Activated CD4-positive, alpha-beta memory T cell treated with anti-CD3 and anti-CD28 coated beads for 36 hours (primary cell): ENCODE measurements at regions of chr12 and their contacts with region 1.

Region 1: GRCh38 chr12:5988659-5989116 is 43.6 kb upstream of the ANO2 start:
- DNase-seq: peak; percentile 79
- H3K4me3 Mint-ChIP-seq: no peak overlapping the region
- H3K27ac Mint-ChIP-seq: no peak overlapping the region
- H3K4me1 Mint-ChIP-seq: no peaks in the 10 kb centered on the region
- H3K27me3 Mint-ChIP-seq: no peaks in the 10 kb centered on the region

Region 2: DNA sequence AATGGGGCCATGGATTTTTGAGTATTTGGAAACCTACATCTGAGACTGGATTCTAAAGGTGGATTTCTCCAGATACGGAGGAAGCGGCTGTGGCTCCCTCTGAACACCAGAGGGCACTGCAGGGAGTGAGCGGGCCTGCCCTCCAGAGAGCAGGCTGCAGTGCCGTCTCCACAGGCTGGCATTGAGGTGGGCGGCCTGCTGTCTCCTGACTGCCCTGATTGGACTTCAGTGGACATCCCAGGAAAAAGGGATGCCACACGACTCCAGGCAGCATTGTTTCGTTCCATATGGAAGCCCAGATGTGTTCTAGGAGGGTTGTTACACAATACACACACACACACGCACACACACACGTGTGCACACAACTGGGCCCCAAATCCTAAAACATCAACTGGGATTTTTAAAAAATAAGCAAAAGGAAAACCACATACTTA is 22.7 kb before region 1 on chr12:
- CTCF ChIA-PET with region 1: interaction called, 17 read pairs
- POLR2A ChIA-PET with region 1: no interaction called
- intact Hi-C with region 1: no loop called
- DNase-seq: peak; percentile 57
- H3K4me3 Mint-ChIP-seq: no peak overlapping the region
- H3K27ac Mint-ChIP-seq: no peak overlapping the region
- H3K4me1 Mint-ChIP-seq: no peaks in the 10 kb centered on the region
- H3K27me3 Mint-ChIP-seq: peaks cover 4% of the 10 kb centered on the region

Region 3: GRCh38 chr12:5977556-5977955 is 11.1 kb before region 1 on chr12:
- CTCF ChIA-PET with region 1: interaction called, 24 read pairs
- POLR2A ChIA-PET with region 1: no interaction called
- intact Hi-C with region 1: no loop called
- DNase-seq: no peak
- H3K4me3 Mint-ChIP-seq: no peak overlapping the region
- H3K27ac Mint-ChIP-seq: no peak overlapping the region
- H3K4me1 Mint-ChIP-seq: no peaks in the 10 kb centered on the region
- H3K27me3 Mint-ChIP-seq: peaks cover 15% of the 10 kb centered on the region

Region 4: GRCh38 chr12:6039894-6040568 is 51.3 kb after region 1 on chr12:
- CTCF ChIA-PET with region 1: interaction called, 285 read pairs
- POLR2A ChIA-PET with region 1: no interaction called
- intact Hi-C with region 1: loop called (anchors 1 kb)
- DNase-seq: peak; percentile 58
- H3K4me3 Mint-ChIP-seq: no peak overlapping the region
- H3K27ac Mint-ChIP-seq: no peak overlapping the region
- H3K4me1 Mint-ChIP-seq: no peaks in the 10 kb centered on the region
- H3K27me3 Mint-ChIP-seq: no peaks in the 10 kb centered on the region

Region 5: GRCh38 chr12:6285063-6285477 is 296.4 kb after region 1 on chr12:
- CTCF ChIA-PET with region 1: interaction called, 26 read pairs
- POLR2A ChIA-PET with region 1: no interaction called
- intact Hi-C with region 1: loop called (anchors 1 kb)
- DNase-seq: peak; percentile 69
- H3K4me3 Mint-ChIP-seq: no peak overlapping the region
- H3K27ac Mint-ChIP-seq: peak overlapping the region; percentile 19
- H3K4me1 Mint-ChIP-seq: peaks cover 4% of the 10 kb centered on the region
- H3K27me3 Mint-ChIP-seq: peaks cover 19% of the 10 kb centered on the region